ENCODE measurements at regions of chr7 and their contacts with region 1.

Region 1: GRCh38 chr7:54773472-54774399 is 14.7 kb upstream of the SEC61G start:
- DNase-seq: peak; percentile 29 to 73 (median 57)
- ATAC-seq: peak; percentile 79
- H3K4me3 ChIP-seq: peak overlapping the region; percentile 40 to 47
- H3K4me3 Mint-ChIP-seq: peak overlapping the region; percentile 81
- H3K27ac ChIP-seq: peak overlapping the region in 1 of 2 experiments; percentile 1
- H3K27ac Mint-ChIP-seq: peak overlapping the region; percentile 81
- H3K4me1 ChIP-seq: no peaks in the 10 kb centered on the region
- H3K4me1 Mint-ChIP-seq: peaks cover 2% of the 10 kb centered on the region
- H3K27me3 ChIP-seq: no peaks in the 10 kb centered on the region
- H3K27me3 Mint-ChIP-seq: peaks cover 22% of the 10 kb centered on the region
- CTCF ChIP-seq: peak; percentile 76

Region 2: DNA sequence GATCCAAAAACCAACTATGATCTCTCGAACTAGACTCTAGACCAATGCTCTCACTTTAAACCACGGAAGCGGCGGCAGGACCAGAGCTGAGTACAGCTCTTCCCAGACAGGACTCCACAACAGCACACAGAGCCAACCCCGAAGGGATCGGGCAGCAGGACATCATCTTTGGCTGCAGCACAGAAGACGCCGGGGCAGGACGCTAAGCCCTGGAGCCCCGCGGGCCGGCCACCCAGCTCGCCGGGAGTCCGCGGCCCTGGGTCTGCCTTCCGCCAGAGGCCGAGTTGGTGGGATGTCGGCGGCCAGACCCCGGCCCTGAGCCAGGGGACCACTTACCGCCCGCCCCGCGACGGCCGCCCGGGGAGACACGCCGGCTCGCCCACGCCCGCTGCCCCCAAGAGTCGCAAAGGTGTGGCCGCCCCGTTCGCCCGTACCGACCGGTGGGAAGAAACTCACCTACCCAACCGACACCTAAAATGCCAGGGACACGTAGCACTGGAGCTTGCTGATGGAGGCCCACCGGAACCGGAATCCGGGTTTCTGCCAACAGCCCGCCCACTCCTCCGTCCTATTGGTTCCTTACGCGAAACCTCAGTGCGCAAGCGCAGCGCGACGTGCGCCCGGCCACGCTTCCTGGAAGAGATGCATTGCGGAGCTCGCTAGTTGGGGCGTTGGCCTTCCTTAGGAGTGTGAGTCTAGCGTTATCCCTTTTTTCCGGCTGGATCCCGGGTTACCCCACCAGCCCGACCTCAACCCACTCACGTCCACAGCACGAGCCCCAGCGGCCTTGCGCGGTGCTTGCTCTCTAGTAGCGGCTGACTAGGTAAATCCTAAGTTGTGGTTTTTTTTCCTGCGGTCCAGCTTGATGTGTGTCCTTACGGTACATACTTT is 14.8 kb before region 1 on chr7 and contains the start of gene SEC61G:
- CTCF ChIA-PET with region 1: interaction called, 13 read pairs
- POLR2A ChIA-PET with region 1: interaction called, 6 read pairs
- intact Hi-C with region 1: no loop called
- DNase-seq: peak; percentile 87 to 98 (median 95)
- ATAC-seq: peak; percentile 97
- H3K4me3 ChIP-seq: peak within 1 kb of the TSS; percentile 78 to 96
- H3K4me3 Mint-ChIP-seq: peak within 1 kb of the TSS; percentile 100
- H3K27ac ChIP-seq: peak within 1 kb of the TSS; percentile 74 to 90
- H3K27ac Mint-ChIP-seq: peak within 1 kb of the TSS; percentile 97
- H3K4me1 ChIP-seq: peaks cover 21% of the 10 kb centered on the region
- H3K4me1 Mint-ChIP-seq: peaks cover 46% of the 10 kb centered on the region
- H3K27me3 ChIP-seq: no peaks in the 10 kb centered on the region
- H3K27me3 Mint-ChIP-seq: peaks cover 3% of the 10 kb centered on the region
- CTCF ChIP-seq: no peak
- total RNA-seq, gene SEC61G: 50.5 to 58.0 TPM

Region 3: GRCh38 chr7:55255496-55256435 is 482.0 kb after region 1 on chr7:
- CTCF ChIA-PET with region 1: interaction called, 54 read pairs
- POLR2A ChIA-PET with region 1: no interaction called
- intact Hi-C with region 1: loop called (anchors 1 to 2 kb)
- DNase-seq: peak; percentile 18 to 79 (median 63)
- ATAC-seq: peak; percentile 89
- H3K4me3 ChIP-seq: peak overlapping the region; percentile 43 to 55
- H3K4me3 Mint-ChIP-seq: peak overlapping the region; percentile 89
- H3K27ac ChIP-seq: no peak overlapping the region
- H3K27ac Mint-ChIP-seq: no peak overlapping the region
- H3K4me1 ChIP-seq: peaks cover 14% of the 10 kb centered on the region
- H3K4me1 Mint-ChIP-seq: peaks cover 16% of the 10 kb centered on the region
- H3K27me3 ChIP-seq: peaks cover 3 to 12% of the 10 kb centered on the region in 2 experiments
- H3K27me3 Mint-ChIP-seq: peaks cover 48% of the 10 kb centered on the region
- CTCF ChIP-seq: no peak

Region 4: GRCh38 chr7:55415173-55415778 is 641.5 kb after region 1 on chr7:
- CTCF ChIA-PET with region 1: no interaction called
- POLR2A ChIA-PET with region 1: no interaction called
- intact Hi-C with region 1: loop called (anchors 2 kb)
- DNase-seq: peak; percentile 61 to 86 (median 84)
- ATAC-seq: peak; percentile 100
- H3K4me3 ChIP-seq: no peak overlapping the region
- H3K4me3 Mint-ChIP-seq: no peak overlapping the region
- H3K27ac ChIP-seq: no peak overlapping the region
- H3K27ac Mint-ChIP-seq: no peak overlapping the region
- H3K4me1 ChIP-seq: no peaks in the 10 kb centered on the region
- H3K4me1 Mint-ChIP-seq: no peaks in the 10 kb centered on the region
- H3K27me3 ChIP-seq: no peaks in the 10 kb centered on the region
- H3K27me3 Mint-ChIP-seq: no peaks in the 10 kb centered on the region
- CTCF ChIP-seq: peak; percentile 94